ENCODE measurements at regions of chr7 and their contacts with region 1.

Region 1: GRCh38 chr7:144459635-144460034 is 56.1 kb upstream of the NOBOX start:
- DNase-seq: no peak
- ATAC-seq: no peak
- H3K4me3 ChIP-seq: no peak overlapping the region
- H3K27ac ChIP-seq: no peak overlapping the region
- H3K4me1 ChIP-seq: no peaks in the 10 kb centered on the region
- H3K27me3 ChIP-seq: no peaks in the 10 kb centered on the region
- CTCF ChIP-seq: no peak

Region 2: DNA sequence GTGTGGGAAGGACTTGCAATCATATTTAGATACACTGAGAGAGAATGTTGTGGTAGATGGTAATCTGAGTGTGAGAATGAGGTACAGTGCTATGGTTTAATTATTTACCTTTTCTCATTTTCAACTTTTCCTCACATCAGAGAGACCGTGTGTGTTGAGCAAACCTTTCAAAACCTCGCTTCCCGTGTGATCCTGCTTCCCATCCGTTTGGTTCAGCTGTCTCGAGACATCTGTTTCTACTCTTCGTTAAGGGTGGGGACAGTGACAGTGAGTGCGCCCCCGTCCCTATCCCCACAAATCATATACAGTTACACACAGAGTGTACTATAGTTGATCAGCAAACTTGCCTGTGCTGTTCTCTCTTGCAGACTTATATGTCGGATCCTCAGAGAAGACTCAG is 23.1 kb before region 1 on chr7:
- intact Hi-C with region 1: no loop called
- DNase-seq: no peak
- ATAC-seq: no peak
- H3K4me3 ChIP-seq: no peak overlapping the region
- H3K27ac ChIP-seq: no peak overlapping the region
- H3K4me1 ChIP-seq: no peaks in the 10 kb centered on the region
- H3K27me3 ChIP-seq: no peaks in the 10 kb centered on the region
- CTCF ChIP-seq: no peak

Region 3: GRCh38 chr7:144513334-144513733 is 53.7 kb after region 1 on chr7:
- intact Hi-C with region 1: loop called in 1 of 10 experiments (anchors 5 kb)
- DNase-seq: no peak
- ATAC-seq: peak in 7 of 8 donors; percentile 43 to 81 (median 73)
- H3K4me3 ChIP-seq: no peak overlapping the region
- H3K27ac ChIP-seq: no peak overlapping the region
- H3K4me1 ChIP-seq: peaks cover 0 to 17% (median 8%) of the 10 kb centered on the region in 9 donors
- H3K27me3 ChIP-seq: no peaks in the 10 kb centered on the region
- CTCF ChIP-seq: peak in 8 of 9 donors; percentile 10 to 66 (median 53)

Region 4: GRCh38 chr7:145698526-145699262 is 1239.1 kb after region 1 on chr7:
- intact Hi-C with region 1: no loop called
- DNase-seq: no peak
- ATAC-seq: peak in 1 of 8 donors; percentile 42
- H3K4me3 ChIP-seq: no peak overlapping the region
- H3K27ac ChIP-seq: no peak overlapping the region
- H3K4me1 ChIP-seq: no peaks in the 10 kb centered on the region
- H3K27me3 ChIP-seq: no peaks in the 10 kb centered on the region
- CTCF ChIP-seq: no peak

Measured in heart right ventricle (tissue), 16 donors.